Aorta (tissue), 5 donors: ENCODE measurements at regions of chr10 and their contacts with region 1.

Region 1: DNA sequence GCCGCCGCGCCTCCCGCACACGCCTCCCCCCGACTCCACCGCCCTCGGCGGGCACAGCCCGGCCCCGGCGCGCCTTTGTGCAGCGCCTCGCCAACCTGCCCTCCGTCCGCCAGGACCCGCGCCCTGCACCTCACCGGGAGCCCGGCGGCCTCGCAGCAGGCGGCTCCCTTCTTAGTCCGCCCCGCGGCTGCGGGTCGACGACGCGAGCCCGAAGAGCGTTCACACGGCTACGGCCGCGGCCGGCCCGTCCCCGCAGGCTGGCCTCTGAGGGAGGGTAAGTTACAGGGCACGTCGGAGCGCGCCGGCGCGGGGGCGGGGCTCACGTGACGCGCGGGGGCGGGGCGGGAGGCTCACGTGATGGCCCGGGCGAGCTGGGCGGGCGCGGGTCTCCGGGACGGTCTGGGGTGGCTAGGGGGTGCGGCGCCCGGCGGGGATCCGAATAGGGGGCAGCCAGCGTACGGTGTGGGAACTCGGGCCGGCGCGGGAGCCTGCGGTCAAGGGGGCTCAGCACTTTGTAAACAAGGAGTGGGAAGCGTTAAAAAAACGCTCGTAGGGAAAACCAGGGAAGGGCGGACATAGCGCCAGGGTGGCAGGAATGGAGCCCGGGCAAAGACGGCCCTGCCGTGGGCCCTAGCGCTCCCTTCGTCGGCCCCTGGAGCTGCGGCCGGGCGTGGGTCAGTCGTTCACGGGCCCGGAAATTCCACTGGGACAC is at the start of gene ARHGAP12:
- DNase-seq: peak; percentile 93 to 97
- ATAC-seq: peak; percentile 97
- H3K4me3 ChIP-seq: peak within 1 kb of the TSS; percentile 69 to 98
- H3K27ac ChIP-seq: peak within 1 kb of the TSS; percentile 93 to 98
- H3K4me1 ChIP-seq: peaks cover 0 to 4% of the 10 kb centered on the region in 2 donors
- H3K27me3 ChIP-seq: no peaks in the 10 kb centered on the region
- total RNA-seq, gene ARHGAP12: 23.6 to 34.6 TPM

Region 2: DNA sequence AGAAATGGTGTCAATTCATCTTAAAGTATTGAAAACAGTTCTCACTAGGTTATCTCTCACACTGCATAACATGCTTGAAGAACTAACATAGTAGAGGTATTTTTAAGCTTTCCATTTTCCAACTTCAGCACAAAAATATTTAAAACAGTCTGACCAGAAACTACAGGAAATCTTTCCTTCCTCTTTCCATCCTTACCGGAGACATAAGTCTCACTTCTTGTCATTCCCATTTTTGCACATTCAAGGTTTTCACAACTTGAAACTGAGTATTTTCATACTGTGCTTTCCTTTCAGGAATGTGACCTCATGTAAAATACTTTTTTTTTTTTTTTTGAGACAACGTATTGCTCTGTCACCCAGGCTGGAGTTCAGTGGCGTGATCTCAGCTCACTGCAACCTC is 45.3 kb before region 1 on chr10:
- intact Hi-C with region 1: loop called in 1 of 2 experiments (anchors 2 kb)
- DNase-seq: no peak
- ATAC-seq: no peak
- H3K4me3 ChIP-seq: no peak overlapping the region
- H3K27ac ChIP-seq: no peak overlapping the region
- H3K4me1 ChIP-seq: peaks cover 8 to 12% of the 10 kb centered on the region in 2 donors
- H3K27me3 ChIP-seq: no peaks in the 10 kb centered on the region

Region 3: GRCh38 chr10:31994926-31995325 is 66.2 kb after region 1 on chr10:
- intact Hi-C with region 1: no loop called
- DNase-seq: no peak
- ATAC-seq: no peak
- H3K4me3 ChIP-seq: no peak overlapping the region
- H3K27ac ChIP-seq: no peak overlapping the region
- H3K4me1 ChIP-seq: no peaks in the 10 kb centered on the region
- H3K27me3 ChIP-seq: no peaks in the 10 kb centered on the region